H1 (cell line): ENCODE measurements at regions of chr1 and their contacts with region 1.

Region 1: GRCh38 chr1:86499987-86500593 is 31.4 kb downstream of the CLCA1 start:
- DNase-seq: no peak
- H3K4me3 ChIP-seq: no peak overlapping the region
- H3K27ac ChIP-seq: no peak overlapping the region
- H3K4me1 ChIP-seq: peaks cover 10 to 18% (median 12%) of the 10 kb centered on the region in 4 experiments
- H3K27me3 ChIP-seq: no peaks in the 10 kb centered on the region
- CTCF ChIP-seq: peak in 2 of 3 experiments; percentile 64 to 99; a peak in 3 of 4 replicates
- EP300 ChIP-seq: no peak
- POLR2A ChIP-seq: no peak
- RAD21 ChIP-seq: no peak

Region 2: DNA sequence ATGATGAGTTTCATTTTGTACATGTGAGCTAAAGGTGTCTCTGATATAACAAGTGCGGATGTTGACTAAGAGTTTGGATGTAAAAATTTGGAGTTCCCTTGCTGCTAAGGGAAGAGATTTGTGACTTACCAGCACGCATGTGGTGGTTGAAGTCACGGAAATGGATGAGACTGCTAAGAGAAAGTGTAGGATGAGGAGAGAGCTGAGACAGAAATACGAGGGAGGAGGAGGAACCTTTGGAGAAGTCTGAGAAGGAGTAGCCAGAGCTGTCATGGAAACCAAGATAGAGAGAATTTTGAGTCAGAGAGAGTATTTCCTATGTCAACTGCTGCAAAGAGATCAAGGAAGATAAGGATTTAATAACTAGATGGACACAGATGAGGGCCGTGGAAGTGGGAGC is 237.0 kb before region 1 on chr1:
- CTCF ChIA-PET with region 1: no interaction called
- POLR2A ChIA-PET with region 1: no interaction called
- DNase-seq: no peak
- H3K4me3 ChIP-seq: no peak overlapping the region
- H3K27ac ChIP-seq: no peak overlapping the region
- H3K4me1 ChIP-seq: no peaks in the 10 kb centered on the region
- H3K27me3 ChIP-seq: peaks cover 0 to 1% (median 0%) of the 10 kb centered on the region in 4 experiments; a peak in 1 of 7 replicates
- CTCF ChIP-seq: no peak
- EP300 ChIP-seq: no peak
- POLR2A ChIP-seq: no peak
- RAD21 ChIP-seq: no peak

Region 3: DNA sequence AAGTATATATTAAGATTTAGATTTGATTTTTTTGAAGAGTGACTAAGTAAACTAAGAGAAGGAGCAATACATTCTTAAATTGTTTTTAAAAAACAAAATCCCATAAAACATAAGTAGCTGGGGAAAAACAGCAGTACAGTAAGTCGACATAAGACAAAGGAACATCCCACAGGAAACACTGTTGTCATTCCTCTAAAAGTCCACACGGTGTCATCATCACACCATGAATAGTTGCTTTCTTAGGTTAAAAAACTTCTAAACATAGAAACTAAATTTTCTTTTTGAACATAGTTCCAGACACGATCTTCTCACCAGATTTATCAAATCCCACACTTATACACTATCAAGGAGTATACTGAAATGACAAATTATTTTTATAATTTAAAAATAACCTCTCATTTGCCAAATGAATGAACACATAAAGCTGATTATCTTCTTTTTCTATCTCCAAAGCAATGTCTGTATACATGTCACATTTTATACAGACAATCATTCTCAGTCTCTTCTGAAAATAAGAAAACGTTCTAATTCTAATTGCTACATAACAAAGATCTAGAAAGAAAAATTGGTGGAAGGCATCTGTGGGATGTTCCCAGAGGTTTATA is 119.7 kb before region 1 on chr1:
- CTCF ChIA-PET with region 1: interaction called, 15 read pairs
- POLR2A ChIA-PET with region 1: interaction called, 3 read pairs
- DNase-seq: no peak
- H3K4me3 ChIP-seq: no peak overlapping the region
- H3K27ac ChIP-seq: no peak overlapping the region
- H3K4me1 ChIP-seq: no peaks in the 10 kb centered on the region
- H3K27me3 ChIP-seq: no peaks in the 10 kb centered on the region
- CTCF ChIP-seq: peak in 2 of 3 experiments; percentile 64; a peak in 2 of 4 replicates
- EP300 ChIP-seq: no peak
- POLR2A ChIP-seq: no peak
- RAD21 ChIP-seq: peak; percentile 84 to 86

Region 4: GRCh38 chr1:86472767-86473166 is 27.3 kb before region 1 on chr1:
- CTCF ChIA-PET with region 1: interaction called, 79 read pairs
- POLR2A ChIA-PET with region 1: interaction called, 3 read pairs
- DNase-seq: no peak
- H3K4me3 ChIP-seq: no peak overlapping the region
- H3K27ac ChIP-seq: no peak overlapping the region
- H3K4me1 ChIP-seq: no peaks in the 10 kb centered on the region
- H3K27me3 ChIP-seq: no peaks in the 10 kb centered on the region
- CTCF ChIP-seq: no peak
- EP300 ChIP-seq: no peak
- POLR2A ChIP-seq: no peak
- RAD21 ChIP-seq: no peak

Region 5: GRCh38 chr1:86487131-86487810 is 12.8 kb before region 1 on chr1:
- CTCF ChIA-PET with region 1: interaction called, 39 read pairs
- POLR2A ChIA-PET with region 1: interaction called, 5 read pairs
- DNase-seq: no peak
- H3K4me3 ChIP-seq: no peak overlapping the region
- H3K27ac ChIP-seq: no peak overlapping the region
- H3K4me1 ChIP-seq: no peaks in the 10 kb centered on the region
- H3K27me3 ChIP-seq: no peaks in the 10 kb centered on the region
- CTCF ChIP-seq: no peak
- EP300 ChIP-seq: no peak
- POLR2A ChIP-seq: no peak
- RAD21 ChIP-seq: no peak

Region 6: DNA sequence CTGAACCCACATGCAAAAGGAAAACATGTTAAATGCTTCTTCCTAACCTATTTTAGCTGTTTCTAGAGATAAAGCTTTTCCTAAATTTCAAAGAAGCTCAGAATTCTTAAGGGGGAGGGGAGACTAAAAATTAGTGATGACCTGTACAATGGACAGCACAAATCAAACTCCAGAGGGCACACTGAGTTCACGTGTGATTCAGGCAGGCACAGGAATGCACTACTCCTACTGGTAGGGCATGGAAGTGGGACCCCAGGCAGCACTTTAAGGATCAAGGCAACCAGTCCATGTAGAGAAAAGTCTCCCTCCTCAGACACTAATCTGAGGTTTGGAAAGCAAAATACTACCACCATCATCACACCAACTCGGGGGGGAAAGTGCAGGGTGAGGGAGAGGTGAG is 15.5 kb after region 1 on chr1:
- CTCF ChIA-PET with region 1: interaction called, 31 read pairs
- POLR2A ChIA-PET with region 1: no interaction called
- DNase-seq: no peak
- H3K4me3 ChIP-seq: no peak overlapping the region
- H3K27ac ChIP-seq: no peak overlapping the region
- H3K4me1 ChIP-seq: no peaks in the 10 kb centered on the region
- H3K27me3 ChIP-seq: no peaks in the 10 kb centered on the region
- CTCF ChIP-seq: peak; percentile 73 to 98 (median 79)
- EP300 ChIP-seq: no peak
- POLR2A ChIP-seq: no peak
- RAD21 ChIP-seq: peak; percentile 70 to 75

Region 7: DNA sequence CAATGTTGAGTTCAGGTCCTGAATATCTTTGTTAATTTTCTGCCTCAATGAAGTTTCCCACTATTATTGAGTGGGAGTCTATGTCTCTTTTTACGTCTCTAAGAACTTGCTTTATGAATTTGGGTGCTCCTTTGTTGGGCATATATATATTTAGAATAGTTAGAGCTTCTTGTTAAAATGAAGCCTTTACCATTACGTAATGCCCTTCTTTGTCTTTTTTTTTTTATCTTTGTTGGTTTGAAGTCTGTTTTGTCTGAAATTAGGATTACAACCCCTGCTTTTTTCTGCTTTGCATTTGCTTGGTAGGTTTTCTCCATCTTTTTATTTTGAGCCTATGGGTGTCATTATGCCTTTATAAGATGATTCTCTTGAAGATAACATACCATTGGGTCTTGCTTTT is 57.6 kb after region 1 on chr1:
- CTCF ChIA-PET with region 1: no interaction called
- POLR2A ChIA-PET with region 1: no interaction called
- DNase-seq: no peak
- H3K4me3 ChIP-seq: no peak overlapping the region
- H3K27ac ChIP-seq: no peak overlapping the region
- H3K4me1 ChIP-seq: no peaks in the 10 kb centered on the region
- H3K27me3 ChIP-seq: no peaks in the 10 kb centered on the region
- CTCF ChIP-seq: no peak
- EP300 ChIP-seq: no peak
- POLR2A ChIP-seq: no peak
- RAD21 ChIP-seq: no peak

Region 8: DNA sequence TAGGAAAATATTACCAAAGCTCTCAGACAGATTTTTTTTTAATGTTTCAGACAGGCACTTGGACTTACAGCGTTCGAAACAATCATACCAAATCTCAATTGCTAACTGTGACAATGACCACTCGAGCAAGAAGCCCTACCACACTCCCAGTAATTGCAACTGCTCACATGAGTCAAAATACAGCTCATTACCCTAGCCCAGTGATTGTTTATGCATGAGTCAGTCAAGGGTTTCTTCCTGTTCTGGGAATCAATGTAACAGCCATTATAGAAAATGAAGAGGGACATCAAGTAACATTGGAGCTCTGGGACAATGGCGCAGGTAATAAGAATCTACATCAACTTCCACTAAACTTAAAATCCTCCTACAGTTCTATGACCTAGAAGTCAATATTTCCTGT is 148.2 kb after region 1 on chr1:
- CTCF ChIA-PET with region 1: interaction called, 24 read pairs
- POLR2A ChIA-PET with region 1: no interaction called
- DNase-seq: no peak
- H3K4me3 ChIP-seq: no peak overlapping the region
- H3K27ac ChIP-seq: no peak overlapping the region
- H3K4me1 ChIP-seq: no peaks in the 10 kb centered on the region
- H3K27me3 ChIP-seq: no peaks in the 10 kb centered on the region
- CTCF ChIP-seq: no peak
- EP300 ChIP-seq: no peak
- POLR2A ChIP-seq: no peak
- RAD21 ChIP-seq: no peak

Region 9: DNA sequence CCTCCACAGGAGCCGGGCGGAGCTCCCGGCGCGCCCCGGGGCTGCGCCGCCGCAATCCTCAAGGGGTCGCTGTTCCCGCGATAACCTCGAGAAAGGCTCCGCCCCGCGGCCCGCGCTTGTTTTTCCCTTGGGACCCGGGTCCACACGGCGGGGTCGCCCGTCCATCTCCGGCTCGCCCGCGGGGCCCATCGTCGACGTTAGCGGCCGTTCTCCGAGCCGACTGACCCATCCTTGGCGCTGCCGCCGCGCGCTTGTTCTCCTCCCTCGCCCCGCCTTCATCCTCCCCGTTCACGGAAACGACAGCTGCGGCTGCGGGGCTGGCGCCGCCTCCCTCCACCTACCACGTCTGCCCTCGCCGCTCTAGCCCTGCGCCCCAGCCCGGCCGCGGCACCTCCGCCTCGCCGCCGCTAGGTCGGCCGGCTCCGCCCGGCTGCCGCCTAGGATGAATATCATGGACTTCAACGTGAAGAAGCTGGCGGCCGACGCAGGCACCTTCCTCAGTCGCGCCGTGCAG is 204.4 kb after region 1 on chr1 and contains the start of gene SH3GLB1:
- CTCF ChIA-PET with region 1: interaction called, 10 read pairs
- POLR2A ChIA-PET with region 1: interaction called, 8 read pairs
- DNase-seq: peak; percentile 54 to 98
- H3K4me3 ChIP-seq: peak within 1 kb of the TSS; percentile 70 to 83 (median 82)
- H3K27ac ChIP-seq: peak within 1 kb of the TSS; percentile 84
- H3K4me1 ChIP-seq: peaks cover 0 to 7% (median 3%) of the 10 kb centered on the region in 4 experiments; a peak in 4 of 7 replicates
- H3K27me3 ChIP-seq: no peaks in the 10 kb centered on the region; a peak in 1 of 7 replicates
- CTCF ChIP-seq: peak; percentile 70 to 84 (median 82)
- EP300 ChIP-seq: 0 out of 3 replicates have a peak, but pooled peaks of 1 of the 2 experiments have one; percentile 15
- POLR2A ChIP-seq: peak; percentile 71 to 76
- RAD21 ChIP-seq: peak; percentile 45 to 65
- total RNA-seq, gene SH3GLB1: 39.4 and 43.1 TPM in 2 replicates